ENCODE measurements at regions of chr15 and their contacts with region 1.

Region 1: DNA sequence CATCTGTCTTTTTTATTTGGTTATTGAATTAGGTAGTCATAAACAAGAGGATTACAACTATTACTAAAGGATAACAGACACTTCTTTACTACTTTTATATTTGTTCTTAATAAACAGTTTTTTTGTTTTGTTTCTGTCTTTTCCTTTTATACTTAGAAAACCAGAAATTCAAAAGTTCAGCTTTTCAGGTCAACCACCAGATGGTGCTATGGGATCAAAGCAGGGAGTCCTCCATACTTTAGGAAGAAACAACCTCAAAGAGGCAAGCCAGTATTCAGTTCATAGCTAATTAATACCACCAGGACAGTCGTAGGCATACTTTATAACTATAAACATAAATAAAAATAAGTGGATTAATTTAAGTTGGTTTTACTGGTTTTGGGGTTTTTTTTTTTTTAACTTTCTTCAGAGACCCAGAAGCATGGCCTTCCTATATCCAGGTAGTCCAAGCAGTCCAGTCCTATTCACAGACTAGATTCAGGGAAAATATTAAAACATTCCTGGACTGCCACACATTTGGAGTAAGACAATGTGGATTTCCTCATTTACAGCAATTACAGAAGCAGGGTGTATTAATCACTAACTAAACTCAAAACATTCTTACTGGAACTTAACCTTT is 16.0 kb upstream of the EID1 start:
- DNase-seq: peak; percentile 22
- ATAC-seq: peak; percentile 68
- H3K4me3 Mint-ChIP-seq: no peak overlapping the region
- H3K27ac Mint-ChIP-seq: no peak overlapping the region
- H3K4me1 Mint-ChIP-seq: peaks cover 6% of the 10 kb centered on the region
- H3K27me3 Mint-ChIP-seq: peaks cover 3% of the 10 kb centered on the region
- CTCF ChIP-seq: peak; percentile 95

Region 2: GRCh38 chr15:48877630-48878595 is 16.0 kb after region 1 on chr15 and contains the start of gene EID1:
- CTCF ChIA-PET with region 1: interaction called, 19 read pairs
- POLR2A ChIA-PET with region 1: interaction called, 4 read pairs
- intact Hi-C with region 1: no loop called
- DNase-seq: peak; percentile 96
- ATAC-seq: peak; percentile 94
- H3K4me3 Mint-ChIP-seq: peak within 1 kb of the TSS; percentile 99
- H3K27ac Mint-ChIP-seq: peak within 1 kb of the TSS; percentile 99
- H3K4me1 Mint-ChIP-seq: peaks cover 33% of the 10 kb centered on the region
- H3K27me3 Mint-ChIP-seq: peaks cover 5% of the 10 kb centered on the region
- CTCF ChIP-seq: no peak
- total RNA-seq, gene EID1: 78.3 to 80.5 TPM

Region 3: DNA sequence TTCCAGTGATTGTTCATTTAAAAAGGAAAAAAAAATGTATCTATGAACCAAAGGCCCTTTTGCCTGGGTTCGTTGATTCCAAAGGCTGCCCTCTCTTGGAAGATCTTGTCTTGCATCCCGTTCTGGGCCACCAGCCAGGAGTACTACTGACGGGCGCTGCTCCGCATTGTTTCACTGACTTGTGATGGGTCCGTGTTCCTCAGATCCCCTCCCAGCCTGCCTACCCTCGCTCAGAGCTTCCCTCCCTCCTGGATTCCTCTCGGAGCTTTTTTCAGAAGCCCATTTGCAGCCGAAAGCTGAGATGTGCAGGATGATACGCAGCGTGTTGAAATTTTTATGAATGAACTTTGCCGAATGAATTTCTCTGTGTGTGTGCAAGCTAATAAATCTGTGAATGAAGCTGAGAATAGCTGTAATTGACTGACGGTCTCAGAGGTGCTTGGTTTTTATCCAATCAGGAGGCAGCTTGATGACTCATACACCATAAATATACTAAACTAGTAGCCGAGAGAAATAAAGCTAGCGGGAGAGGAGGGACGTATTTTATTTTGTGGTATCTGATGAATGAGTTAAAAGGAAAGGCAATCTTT is 101.7 kb after region 1 on chr15 and contains the start of gene SHC4:
- CTCF ChIA-PET with region 1: interaction called, 44 read pairs
- POLR2A ChIA-PET with region 1: interaction called, 4 read pairs
- intact Hi-C with region 1: loop called (anchors 5 kb)
- DNase-seq: peak; percentile 35
- ATAC-seq: peak; percentile 52
- H3K4me3 Mint-ChIP-seq: peak within 1 kb of the TSS; percentile 78
- H3K27ac Mint-ChIP-seq: peak within 1 kb of the TSS; percentile 65
- H3K4me1 Mint-ChIP-seq: peaks cover 33% of the 10 kb centered on the region
- H3K27me3 Mint-ChIP-seq: peaks cover 31% of the 10 kb centered on the region
- CTCF ChIP-seq: no peak
- total RNA-seq, gene SHC4: 2.5 TPM

Region 4: GRCh38 chr15:49046220-49047102 is 184.5 kb after region 1 on chr15 and contains the start of gene SECISBP2L:
- CTCF ChIA-PET with region 1: interaction called, 6 read pairs
- POLR2A ChIA-PET with region 1: no interaction called
- intact Hi-C with region 1: loop called (anchors 10 kb)
- DNase-seq: peak; percentile 96
- ATAC-seq: peak; percentile 97
- H3K4me3 Mint-ChIP-seq: peak within 1 kb of the TSS; percentile 91
- H3K27ac Mint-ChIP-seq: peak within 1 kb of the TSS; percentile 84
- H3K4me1 Mint-ChIP-seq: peaks cover 27% of the 10 kb centered on the region
- H3K27me3 Mint-ChIP-seq: no peaks in the 10 kb centered on the region
- CTCF ChIP-seq: no peak
- total RNA-seq, gene SECISBP2L: 17.9 to 19.6 TPM

Region 5: DNA sequence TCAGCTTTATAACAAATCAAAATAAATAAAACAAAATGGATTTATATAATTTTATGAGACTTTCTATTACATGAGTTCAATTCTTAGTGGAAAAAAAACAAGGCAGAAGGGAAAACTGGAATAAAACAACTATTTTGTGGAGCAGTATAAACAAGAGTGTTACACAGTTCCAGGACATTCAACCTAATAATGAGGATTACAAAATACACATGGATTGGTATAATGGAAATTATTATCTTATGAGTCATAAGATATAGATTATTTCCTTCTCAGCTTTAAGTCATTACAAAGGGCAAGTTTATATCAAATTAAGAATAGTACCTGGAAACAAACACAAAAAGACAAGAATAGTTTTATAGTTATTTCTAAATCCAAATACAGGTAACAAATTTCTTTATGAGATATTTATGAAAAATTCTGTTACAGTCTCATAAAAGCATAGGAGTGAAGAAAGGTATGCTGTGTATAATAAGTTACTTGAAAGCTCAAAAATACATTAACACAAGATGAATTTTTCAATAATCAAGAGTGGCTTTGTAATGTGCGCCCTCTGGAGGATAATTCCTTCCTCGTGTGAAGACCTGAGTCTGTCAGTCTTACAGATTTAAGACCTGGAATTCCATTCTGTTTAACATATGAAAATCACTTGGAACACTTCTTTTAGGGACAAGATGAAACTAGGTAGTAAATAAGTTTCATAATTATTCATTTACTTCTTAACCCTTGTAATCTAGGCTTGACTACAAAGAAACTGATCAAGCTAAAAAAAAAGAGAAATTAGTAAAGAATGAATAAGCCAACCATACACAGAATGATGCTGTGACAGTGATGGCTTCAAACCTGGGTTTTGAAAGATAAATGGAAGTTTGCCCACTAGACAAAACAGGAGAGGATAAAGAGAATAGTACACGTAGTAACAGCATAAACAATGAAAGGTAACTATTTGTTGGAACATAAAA is 284.0 kb after region 1 on chr15:
- CTCF ChIA-PET with region 1: interaction called, 30 read pairs
- POLR2A ChIA-PET with region 1: no interaction called
- intact Hi-C with region 1: loop called (anchors 5 kb)
- DNase-seq: peak; percentile 48
- ATAC-seq: peak; percentile 24
- H3K4me3 Mint-ChIP-seq: no peak overlapping the region
- H3K27ac Mint-ChIP-seq: no peak overlapping the region
- H3K4me1 Mint-ChIP-seq: peaks cover 40% of the 10 kb centered on the region
- H3K27me3 Mint-ChIP-seq: no peaks in the 10 kb centered on the region
- CTCF ChIP-seq: peak; percentile 58

Region 6: GRCh38 chr15:49421991-49422390 is 560.1 kb after region 1 on chr15:
- CTCF ChIA-PET with region 1: interaction called, 32 read pairs
- POLR2A ChIA-PET with region 1: no interaction called
- intact Hi-C with region 1: loop called (anchors 5 kb)
- DNase-seq: peak; percentile 45
- ATAC-seq: peak; percentile 71
- H3K4me3 Mint-ChIP-seq: no peak overlapping the region
- H3K27ac Mint-ChIP-seq: no peak overlapping the region
- H3K4me1 Mint-ChIP-seq: no peaks in the 10 kb centered on the region
- H3K27me3 Mint-ChIP-seq: no peaks in the 10 kb centered on the region
- CTCF ChIP-seq: peak; percentile 80